A673 (cell line): ENCODE measurements at regions of chr14 and their contacts with region 1.

Region 1: GRCh38 chr14:63375771-63376170 is 57.0 kb upstream of the GPHB5 start:
- DNase-seq: no peak
- H3K4me3 ChIP-seq: no peak overlapping the region
- H3K27ac ChIP-seq: no peak overlapping the region
- H3K4me1 ChIP-seq: no peaks in the 10 kb centered on the region
- H3K27me3 ChIP-seq: no peaks in the 10 kb centered on the region
- CTCF ChIP-seq: no peak

Region 2: GRCh38 chr14:62162998-62163589 is 1212.7 kb before region 1 on chr14:
- CTCF ChIA-PET with region 1: no interaction called
- POLR2A ChIA-PET with region 1: no interaction called
- intact Hi-C with region 1: loop called (anchors 10 kb)
- DNase-seq: peak; percentile 74
- H3K4me3 ChIP-seq: no peak overlapping the region
- H3K27ac ChIP-seq: no peak overlapping the region
- H3K4me1 ChIP-seq: no peaks in the 10 kb centered on the region
- H3K27me3 ChIP-seq: no peaks in the 10 kb centered on the region
- CTCF ChIP-seq: peak; percentile 91

Region 3: DNA sequence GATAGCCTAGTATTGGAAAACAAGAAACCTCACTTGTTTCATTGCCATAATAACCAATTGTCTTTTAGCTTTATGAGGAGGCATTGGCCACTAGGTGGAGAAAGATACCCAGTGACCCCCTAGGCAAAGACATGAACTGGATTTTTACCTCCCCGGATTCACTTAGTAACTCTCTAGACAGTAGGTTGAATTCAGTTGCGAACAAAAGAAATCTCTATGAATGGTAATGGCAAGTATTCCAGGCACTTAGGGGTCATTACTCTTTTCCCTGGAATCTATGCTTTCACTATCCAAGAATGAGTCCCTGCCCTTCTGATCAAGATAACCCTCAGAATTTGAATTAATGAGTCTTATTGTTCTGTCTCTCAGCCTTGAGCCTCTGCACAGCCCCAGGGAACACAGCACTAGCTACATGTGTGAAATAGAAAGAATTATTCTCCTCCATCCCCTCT is 201.0 kb before region 1 on chr14:
- CTCF ChIA-PET with region 1: no interaction called
- POLR2A ChIA-PET with region 1: no interaction called
- intact Hi-C with region 1: loop called (anchors 10 kb)
- DNase-seq: peak; percentile 75
- H3K4me3 ChIP-seq: no peak overlapping the region
- H3K27ac ChIP-seq: no peak overlapping the region
- H3K4me1 ChIP-seq: peaks cover 6% of the 10 kb centered on the region
- H3K27me3 ChIP-seq: no peaks in the 10 kb centered on the region
- CTCF ChIP-seq: peak; percentile 70